ENCODE measurements at regions of chrX and their contacts with region 1.

Region 1: DNA sequence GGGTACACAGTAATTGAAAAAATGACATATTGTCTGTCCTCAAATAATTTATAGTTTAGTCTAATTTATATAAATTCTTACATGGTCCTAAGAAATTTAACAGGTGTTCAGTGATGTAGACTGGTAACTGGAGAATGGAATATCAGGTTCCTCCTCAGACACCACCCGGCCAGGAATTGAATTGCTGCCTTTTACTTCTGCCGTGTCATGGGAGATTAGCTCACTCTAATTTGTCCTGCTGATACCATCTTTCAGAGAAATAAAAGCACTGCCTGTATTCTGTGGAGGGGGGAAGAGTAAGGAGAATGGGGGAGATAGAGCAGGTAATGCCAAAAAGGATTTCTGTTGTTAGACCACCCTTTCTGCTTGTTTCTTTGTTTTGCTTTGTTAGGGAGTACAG is 125.2 kb upstream of the KLHL4 start:
- DNase-seq: peak; percentile 36
- H3K4me3 ChIP-seq: no peak overlapping the region
- H3K27ac ChIP-seq: peak overlapping the region; percentile 37
- H3K4me1 ChIP-seq: peaks cover 3% of the 10 kb centered on the region
- H3K27me3 ChIP-seq: no peaks in the 10 kb centered on the region
- CTCF ChIP-seq: no peak
- POLR2A ChIP-seq: no peak

Region 2: DNA sequence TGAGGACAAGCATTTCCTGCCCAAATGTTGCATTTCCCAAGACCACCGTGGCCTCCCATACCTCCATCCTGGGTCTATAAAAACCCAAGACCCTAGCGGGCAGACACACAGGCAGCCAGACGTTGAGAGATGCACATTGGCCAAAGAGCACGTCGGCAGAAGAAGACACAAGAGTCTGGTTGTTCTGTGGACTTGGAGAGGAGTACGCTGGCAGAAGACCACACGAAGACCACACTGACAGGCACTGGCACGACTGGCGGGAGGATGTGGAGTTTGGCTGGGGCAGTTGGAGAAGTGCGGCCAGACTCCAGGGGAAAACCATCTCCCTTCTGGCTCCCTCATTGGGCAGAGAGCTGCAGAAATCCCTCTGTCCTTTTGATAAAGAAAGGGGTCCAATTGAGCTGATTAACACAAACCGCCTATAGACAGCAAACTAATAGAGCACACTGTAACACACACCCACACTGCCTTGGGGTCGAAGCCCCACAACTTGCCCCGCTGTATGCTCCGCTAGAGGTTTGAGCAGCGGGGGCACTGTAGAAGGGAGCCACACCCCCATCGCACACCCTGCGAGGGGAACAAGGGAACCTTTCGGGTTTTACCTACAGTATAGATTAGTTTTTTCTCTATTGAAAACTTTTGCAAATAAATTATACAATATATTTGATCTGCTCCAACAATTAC is 251.4 kb before region 1 on chrX:
- CTCF ChIA-PET with region 1: no interaction called
- POLR2A ChIA-PET with region 1: no interaction called
- dilution Hi-C with region 1: no loop called
- intact Hi-C with region 1: no loop called
- DNase-seq: no peak
- H3K4me3 ChIP-seq: no peak overlapping the region
- H3K27ac ChIP-seq: no peak overlapping the region
- H3K4me1 ChIP-seq: no peaks in the 10 kb centered on the region
- H3K27me3 ChIP-seq: no peaks in the 10 kb centered on the region
- CTCF ChIP-seq: no peak
- POLR2A ChIP-seq: no peak

Region 3: GRCh38 chrX:87327267-87327666 is 65.1 kb before region 1 on chrX:
- CTCF ChIA-PET with region 1: no interaction called
- POLR2A ChIA-PET with region 1: no interaction called
- dilution Hi-C with region 1: no loop called
- intact Hi-C with region 1: no loop called
- DNase-seq: no peak
- H3K4me3 ChIP-seq: no peak overlapping the region
- H3K27ac ChIP-seq: no peak overlapping the region
- H3K4me1 ChIP-seq: no peaks in the 10 kb centered on the region
- H3K27me3 ChIP-seq: no peaks in the 10 kb centered on the region
- CTCF ChIP-seq: no peak
- POLR2A ChIP-seq: no peak

Region 4: DNA sequence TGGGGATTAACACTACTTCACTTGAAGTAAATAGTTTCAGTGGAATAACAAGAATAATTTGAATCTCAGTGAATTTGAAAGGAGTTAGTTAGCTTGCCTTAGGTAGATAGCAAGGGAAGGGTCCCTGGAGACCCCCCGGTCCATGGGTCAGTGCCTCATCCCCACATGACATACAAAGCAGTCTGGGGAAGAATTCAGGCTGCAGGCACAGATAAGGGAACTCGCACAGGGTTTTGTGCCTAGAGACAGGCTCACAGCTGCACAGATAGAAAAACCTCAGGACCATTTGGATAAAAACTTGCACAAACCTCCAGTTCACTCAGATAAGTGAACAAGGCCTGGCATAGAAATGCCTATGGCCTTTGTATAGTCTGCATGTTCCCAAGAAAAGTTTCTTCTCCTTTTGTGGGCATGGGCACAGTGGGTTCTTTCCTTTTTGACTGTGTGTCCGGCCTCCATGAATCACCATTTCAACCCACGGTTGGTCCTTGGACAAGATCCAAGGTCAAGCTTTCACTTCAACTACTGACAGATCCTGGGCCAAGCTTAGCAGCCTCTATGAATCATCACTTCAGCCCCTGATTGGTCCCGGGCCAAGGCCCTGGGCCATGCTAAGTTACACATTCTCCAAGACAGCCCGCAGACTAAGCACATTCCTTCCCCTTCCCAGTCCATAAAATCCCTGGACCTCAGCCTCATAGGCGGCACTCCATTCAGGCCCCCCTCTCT is 16.9 kb after region 1 on chrX:
- CTCF ChIA-PET with region 1: interaction called, 5 read pairs
- POLR2A ChIA-PET with region 1: no interaction called
- dilution Hi-C with region 1: no loop called
- intact Hi-C with region 1: loop called (anchors 1 kb)
- DNase-seq: peak; percentile 96
- H3K4me3 ChIP-seq: no peak overlapping the region
- H3K27ac ChIP-seq: peak overlapping the region; percentile 50
- H3K4me1 ChIP-seq: peaks cover 7% of the 10 kb centered on the region
- H3K27me3 ChIP-seq: no peaks in the 10 kb centered on the region
- CTCF ChIP-seq: no peak
- POLR2A ChIP-seq: no peak

Region 5: DNA sequence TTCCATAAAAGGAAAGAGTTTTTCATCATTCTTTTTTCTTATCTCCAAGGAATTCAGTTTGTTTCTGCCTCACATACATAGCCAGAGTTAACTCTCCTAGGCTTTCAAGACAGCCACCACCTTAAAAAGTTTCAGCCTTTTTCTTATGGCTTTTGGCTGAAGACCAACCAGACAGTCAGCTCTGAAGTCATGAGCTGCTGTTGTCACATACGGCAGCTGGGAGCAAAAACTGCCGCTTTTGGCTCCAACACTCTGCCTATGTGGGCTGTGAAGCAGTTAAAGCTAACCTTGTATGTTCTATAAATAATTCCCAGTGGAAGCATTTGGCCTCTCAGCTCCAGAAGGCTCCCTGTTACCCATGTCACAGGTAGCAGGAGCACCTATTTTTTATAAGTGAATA is 229.3 kb after region 1 on chrX:
- CTCF ChIA-PET with region 1: no interaction called
- POLR2A ChIA-PET with region 1: no interaction called
- dilution Hi-C with region 1: no loop called
- intact Hi-C with region 1: loop called (anchors 5 kb)
- DNase-seq: peak; percentile 46
- H3K4me3 ChIP-seq: no peak overlapping the region
- H3K27ac ChIP-seq: no peak overlapping the region
- H3K4me1 ChIP-seq: peaks cover 13% of the 10 kb centered on the region
- H3K27me3 ChIP-seq: no peaks in the 10 kb centered on the region
- CTCF ChIP-seq: no peak
- POLR2A ChIP-seq: no peak

Measured in endothelial cell of umbilical vein (primary cell).